Activated T-helper 2 cell treated with anti-CD3 and anti-CD28 coated beads, Interferon-gamma antibody, Interleukin-2, Interleukin-4, amounts not matched to agents 10 μg/mL and 5 μg/mL and 100 μg/mL, durations not matched to agents 14 hours and 24 hours and 36 hours (primary cell): ENCODE measurements at regions of chr18 and their contacts with region 1.

Region 1: GRCh38 chr18:75209129-75209950 is at the start of gene PTGR3:
- DNase-seq: peak; percentile 81
- H3K4me3 Mint-ChIP-seq: peak within 1 kb of the TSS; percentile 96
- H3K27ac Mint-ChIP-seq: peak within 1 kb of the TSS; percentile 96
- H3K4me1 Mint-ChIP-seq: peaks cover 48% of the 10 kb centered on the region
- H3K27me3 Mint-ChIP-seq: peaks cover 29% of the 10 kb centered on the region
- total RNA-seq, gene PTGR3: 26.0 and 28.6 TPM in 2 replicates

Region 2: GRCh38 chr18:74597662-74598349 is 611.5 kb before region 1 on chr18 and contains the start of gene ZNF407:
- intact Hi-C with region 1: loop called (anchors 1 kb)
- DNase-seq: peak; percentile 85
- H3K4me3 Mint-ChIP-seq: peak within 1 kb of the TSS; percentile 96
- H3K27ac Mint-ChIP-seq: peak within 1 kb of the TSS; percentile 98
- H3K4me1 Mint-ChIP-seq: peaks cover 44% of the 10 kb centered on the region
- H3K27me3 Mint-ChIP-seq: no peaks in the 10 kb centered on the region
- total RNA-seq, gene ZNF407: 18.3 TPM in 2 replicates

Region 3: GRCh38 chr18:75070625-75071483 is 138.5 kb before region 1 on chr18:
- intact Hi-C with region 1: loop called (anchors 2 kb)
- DNase-seq: peak; percentile 65
- H3K4me3 Mint-ChIP-seq: peak overlapping the region; percentile 79
- H3K27ac Mint-ChIP-seq: peak overlapping the region; percentile 95
- H3K4me1 Mint-ChIP-seq: peaks cover 19% of the 10 kb centered on the region
- H3K27me3 Mint-ChIP-seq: no peaks in the 10 kb centered on the region

Region 4: GRCh38 chr18:75154997-75155396 is 54.3 kb before region 1 on chr18:
- intact Hi-C with region 1: no loop called
- DNase-seq: no peak
- H3K4me3 Mint-ChIP-seq: no peak overlapping the region
- H3K27ac Mint-ChIP-seq: no peak overlapping the region
- H3K4me1 Mint-ChIP-seq: no peaks in the 10 kb centered on the region
- H3K27me3 Mint-ChIP-seq: peaks cover 3% of the 10 kb centered on the region

Region 5: GRCh38 chr18:75408554-75409506 is 199.5 kb after region 1 on chr18:
- intact Hi-C with region 1: loop called (anchors 5 kb)
- DNase-seq: no peak
- H3K4me3 Mint-ChIP-seq: no peak overlapping the region
- H3K27ac Mint-ChIP-seq: no peak overlapping the region
- H3K4me1 Mint-ChIP-seq: peaks cover 6% of the 10 kb centered on the region
- H3K27me3 Mint-ChIP-seq: peaks cover 25% of the 10 kb centered on the region

Region 6: GRCh38 chr18:76492669-76493212 is 1283.4 kb after region 1 on chr18:
- intact Hi-C with region 1: loop called (anchors 5 kb)
- DNase-seq: peak; percentile 97
- H3K4me3 Mint-ChIP-seq: peak overlapping the region; percentile 95
- H3K27ac Mint-ChIP-seq: peak overlapping the region; percentile 67
- H3K4me1 Mint-ChIP-seq: peaks cover 34% of the 10 kb centered on the region
- H3K27me3 Mint-ChIP-seq: peaks cover 70% of the 10 kb centered on the region